ENCODE measurements at regions of chr4 and their contacts with region 1.

Region 1: DNA sequence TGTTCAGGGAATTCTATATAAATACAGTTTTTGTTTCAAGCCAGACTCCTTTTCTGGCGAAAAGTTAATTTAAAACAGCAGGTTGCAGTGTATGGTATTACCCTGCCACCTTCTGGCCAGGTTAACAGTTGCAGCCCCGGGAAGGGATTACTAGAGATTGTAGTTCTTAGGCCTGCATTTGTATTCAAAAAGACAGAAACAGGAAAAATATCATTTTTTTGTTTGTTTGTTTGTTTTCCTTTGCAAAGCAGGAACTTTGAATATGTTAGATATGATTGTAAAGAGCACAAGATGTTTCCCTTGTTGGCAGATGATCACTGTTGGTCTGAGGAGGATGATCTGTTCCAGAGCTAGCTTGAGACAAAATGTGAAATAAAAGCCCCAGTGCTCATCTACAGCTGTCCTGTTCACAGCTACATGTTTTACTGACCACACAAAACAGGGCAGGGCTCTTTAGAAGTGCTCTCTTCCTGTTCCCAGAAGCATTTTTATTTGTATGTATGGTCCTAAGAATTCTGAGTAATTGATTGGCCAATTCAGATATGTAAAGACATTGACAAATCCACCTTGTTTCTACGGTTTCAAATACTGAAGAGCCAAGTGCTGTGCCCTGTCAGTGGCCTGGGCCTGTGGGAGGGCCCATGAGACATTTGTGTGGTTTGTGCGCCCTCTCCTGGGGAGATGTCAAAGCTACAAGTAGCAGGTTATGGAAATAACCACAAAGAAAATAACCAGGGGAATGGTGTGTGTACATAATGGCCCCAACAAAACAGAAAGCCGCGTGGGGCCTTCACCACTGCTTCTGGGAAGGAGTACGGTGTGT is 57.9 kb downstream of the CLDN22 start:
- DNase-seq: peak; percentile 72
- H3K4me3 ChIP-seq: no peak overlapping the region; a peak in 1 of 4 replicates
- H3K27ac ChIP-seq: peak overlapping the region; percentile 20 to 31; a peak in 2 of 4 replicates
- H3K4me1 ChIP-seq: peaks cover 5 to 23% of the 10 kb centered on the region in 2 experiments; a peak in 2 of 4 replicates
- H3K27me3 ChIP-seq: no peaks in the 10 kb centered on the region
- CTCF ChIP-seq: peak; percentile 80
- EP300 ChIP-seq: no peak
- RAD21 ChIP-seq: peak; percentile 89

Region 2: DNA sequence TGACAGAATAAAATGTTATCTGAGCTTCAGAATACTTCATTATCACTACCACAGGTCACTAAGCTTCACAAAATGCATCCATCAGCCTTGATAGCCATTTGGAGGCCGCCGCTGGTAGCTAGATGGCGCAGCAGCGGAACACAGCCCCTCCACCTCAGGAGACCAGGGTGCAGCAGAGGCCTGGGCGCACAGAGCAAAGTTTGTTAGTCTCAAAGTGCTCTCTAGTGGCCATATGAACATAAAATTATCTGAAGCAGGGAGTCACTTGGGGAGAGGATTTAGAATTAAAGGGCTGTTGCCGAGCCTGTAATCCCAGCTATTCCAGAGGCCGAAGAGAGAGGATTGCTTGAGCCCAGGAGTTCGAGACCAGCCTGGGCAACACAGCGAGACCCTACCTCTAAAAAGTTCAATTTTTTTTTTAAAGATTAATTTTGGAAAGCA is 336.8 kb before region 1 on chr4:
- CTCF ChIA-PET with region 1: interaction called, 24 read pairs
- POLR2A ChIA-PET with region 1: no interaction called
- DNase-seq: peak; percentile 79
- H3K4me3 ChIP-seq: no peak overlapping the region; a peak in 1 of 4 replicates
- H3K27ac ChIP-seq: no peak overlapping the region
- H3K4me1 ChIP-seq: no peaks in the 10 kb centered on the region; a peak in 2 of 4 replicates
- H3K27me3 ChIP-seq: no peaks in the 10 kb centered on the region
- CTCF ChIP-seq: peak; percentile 63
- EP300 ChIP-seq: no peak
- RAD21 ChIP-seq: peak; percentile 91

Region 3: GRCh38 chr4:183059797-183060196 is 202.4 kb before region 1 on chr4:
- CTCF ChIA-PET with region 1: interaction called, 13 read pairs
- POLR2A ChIA-PET with region 1: no interaction called
- DNase-seq: no peak
- H3K4me3 ChIP-seq: no peak overlapping the region
- H3K27ac ChIP-seq: no peak overlapping the region
- H3K4me1 ChIP-seq: no peaks in the 10 kb centered on the region; a peak in 1 of 4 replicates
- H3K27me3 ChIP-seq: no peaks in the 10 kb centered on the region; the same call in 1 of the 2 replicates
- CTCF ChIP-seq: no peak
- EP300 ChIP-seq: no peak
- RAD21 ChIP-seq: no peak

Region 4: GRCh38 chr4:183080372-183081115 is 181.6 kb before region 1 on chr4:
- CTCF ChIA-PET with region 1: interaction called, 82 read pairs
- POLR2A ChIA-PET with region 1: no interaction called
- DNase-seq: no peak
- H3K4me3 ChIP-seq: no peak overlapping the region
- H3K27ac ChIP-seq: no peak overlapping the region
- H3K4me1 ChIP-seq: no peaks in the 10 kb centered on the region
- H3K27me3 ChIP-seq: no peaks in the 10 kb centered on the region
- CTCF ChIP-seq: no peak
- EP300 ChIP-seq: no peak
- RAD21 ChIP-seq: no peak

Region 5: GRCh38 chr4:183249857-183250256 is 12.3 kb before region 1 on chr4:
- CTCF ChIA-PET with region 1: interaction called, 84 read pairs
- POLR2A ChIA-PET with region 1: no interaction called
- DNase-seq: peak; percentile 57
- H3K4me3 ChIP-seq: no peak overlapping the region
- H3K27ac ChIP-seq: no peak overlapping the region
- H3K4me1 ChIP-seq: no peaks in the 10 kb centered on the region; a peak in 2 of 4 replicates
- H3K27me3 ChIP-seq: no peaks in the 10 kb centered on the region
- CTCF ChIP-seq: peak; percentile 63
- EP300 ChIP-seq: no peak
- RAD21 ChIP-seq: peak; percentile 86

Region 6: DNA sequence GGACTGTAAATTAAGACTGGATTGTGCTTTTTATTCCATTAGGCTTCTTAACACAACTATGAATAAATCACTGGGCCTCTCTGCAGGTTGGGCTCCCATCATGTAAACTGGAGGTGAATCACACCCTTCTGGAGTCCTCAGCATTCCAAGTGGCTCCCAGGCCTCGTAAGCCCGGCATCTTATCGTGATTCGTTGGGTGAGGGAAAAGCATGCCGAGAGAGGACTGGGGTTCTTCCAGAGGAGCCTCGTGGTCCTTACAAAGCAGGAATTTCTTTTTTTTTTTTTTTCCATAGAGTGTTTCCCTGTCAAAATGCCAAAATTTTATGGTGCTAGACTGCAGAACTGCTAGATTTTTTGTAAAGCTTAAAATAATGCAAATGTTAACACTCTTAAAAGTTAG is 37.9 kb after region 1 on chr4:
- CTCF ChIA-PET with region 1: interaction called, 12 read pairs
- POLR2A ChIA-PET with region 1: no interaction called
- DNase-seq: no peak
- H3K4me3 ChIP-seq: no peak overlapping the region
- H3K27ac ChIP-seq: no peak overlapping the region
- H3K4me1 ChIP-seq: no peaks in the 10 kb centered on the region; a peak in 1 of 4 replicates
- H3K27me3 ChIP-seq: no peaks in the 10 kb centered on the region
- CTCF ChIP-seq: no peak
- EP300 ChIP-seq: no peak
- RAD21 ChIP-seq: no peak

Measured in SK-N-SH (cell line).